Naive thymus-derived CD4-positive, alpha-beta T cell (primary cell): ENCODE measurements at regions of chr7 and their contacts with region 1.

Region 1: DNA sequence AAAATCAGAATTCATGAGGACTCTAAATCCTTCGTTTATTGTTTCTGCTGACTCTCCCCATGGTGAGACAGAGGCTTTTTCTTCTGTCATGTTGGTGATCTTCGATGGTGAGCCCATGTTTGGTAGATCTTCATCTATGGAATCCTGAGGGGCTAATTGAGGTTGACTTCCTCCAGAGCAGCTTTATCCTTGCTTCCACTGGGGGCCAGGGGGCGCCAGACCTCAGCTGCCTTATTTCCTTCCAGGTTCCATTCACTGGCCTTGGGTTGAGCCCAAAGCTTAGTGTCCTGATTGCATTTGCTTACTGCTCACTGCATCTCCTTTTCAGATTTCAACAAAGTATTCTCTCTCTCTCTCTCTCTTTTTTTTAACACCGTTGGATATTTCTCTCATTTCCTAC is 80.7 kb downstream of the GCC1 start:
- DNase-seq: peak in 2 of 9 donors; percentile 5 to 22
- ATAC-seq: no peak
- H3K4me3 ChIP-seq: no peak overlapping the region
- H3K4me3 Mint-ChIP-seq: no peak overlapping the region
- H3K27ac ChIP-seq: no peak overlapping the region
- H3K27ac Mint-ChIP-seq: peak overlapping the region in 1 of 9 donors; percentile 49
- H3K4me1 ChIP-seq: no peaks in the 10 kb centered on the region
- H3K4me1 Mint-ChIP-seq: peaks cover 0 to 7% (median 0%) of the 10 kb centered on the region in 7 donors
- H3K27me3 ChIP-seq: no peaks in the 10 kb centered on the region
- H3K27me3 Mint-ChIP-seq: peaks cover 12 to 37% (median 24%) of the 10 kb centered on the region in 5 donors

Region 2: DNA sequence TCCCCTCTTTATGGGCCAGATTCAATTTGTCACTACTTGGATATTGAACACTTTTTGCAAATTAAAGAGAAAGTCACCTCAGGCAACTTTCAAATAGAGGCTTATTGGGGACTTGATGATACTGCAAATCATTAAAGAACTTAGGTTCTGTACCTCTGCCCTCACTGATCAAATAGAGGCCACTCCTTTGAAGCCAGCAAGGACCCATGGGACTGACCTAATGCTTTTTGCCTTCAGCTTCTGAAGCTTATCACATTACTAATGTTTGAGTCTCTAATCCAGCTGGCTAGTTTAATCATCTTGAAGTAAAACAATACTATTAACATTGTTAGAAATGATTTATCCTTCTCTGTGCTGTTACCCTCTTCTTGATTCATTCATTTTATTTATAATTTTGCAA is 19.2 kb before region 1 on chr7:
- CTCF ChIA-PET with region 1: interaction called, 6 read pairs
- POLR2A ChIA-PET with region 1: no interaction called
- intact Hi-C with region 1: loop called in 1 of 2 experiments (anchors 2 kb)
- DNase-seq: no peak
- ATAC-seq: no peak
- H3K4me3 ChIP-seq: no peak overlapping the region
- H3K4me3 Mint-ChIP-seq: peak overlapping the region in 6 of 10 donors; percentile 7 to 73 (median 60)
- H3K27ac ChIP-seq: no peak overlapping the region
- H3K27ac Mint-ChIP-seq: peak overlapping the region in 1 of 9 donors; percentile 82
- H3K4me1 ChIP-seq: no peaks in the 10 kb centered on the region
- H3K4me1 Mint-ChIP-seq: peaks cover 5 to 17% (median 11%) of the 10 kb centered on the region in 7 donors
- H3K27me3 ChIP-seq: no peaks in the 10 kb centered on the region
- H3K27me3 Mint-ChIP-seq: peaks cover 3 to 28% (median 8%) of the 10 kb centered on the region in 5 donors

Region 3: GRCh38 chr7:127550247-127550646 is 45.5 kb after region 1 on chr7:
- CTCF ChIA-PET with region 1: no interaction called
- POLR2A ChIA-PET with region 1: no interaction called
- intact Hi-C with region 1: no loop called
- DNase-seq: peak in 1 of 9 donors; percentile 4
- ATAC-seq: no peak
- H3K4me3 ChIP-seq: no peak overlapping the region
- H3K4me3 Mint-ChIP-seq: no peak overlapping the region
- H3K27ac ChIP-seq: no peak overlapping the region
- H3K27ac Mint-ChIP-seq: no peak overlapping the region
- H3K4me1 ChIP-seq: no peaks in the 10 kb centered on the region
- H3K4me1 Mint-ChIP-seq: no peaks in the 10 kb centered on the region
- H3K27me3 ChIP-seq: no peaks in the 10 kb centered on the region
- H3K27me3 Mint-ChIP-seq: peaks cover 0 to 14% (median 12%) of the 10 kb centered on the region in 5 donors